ENCODE measurements at regions of chr11 and their contacts with region 1.

Region 1: DNA sequence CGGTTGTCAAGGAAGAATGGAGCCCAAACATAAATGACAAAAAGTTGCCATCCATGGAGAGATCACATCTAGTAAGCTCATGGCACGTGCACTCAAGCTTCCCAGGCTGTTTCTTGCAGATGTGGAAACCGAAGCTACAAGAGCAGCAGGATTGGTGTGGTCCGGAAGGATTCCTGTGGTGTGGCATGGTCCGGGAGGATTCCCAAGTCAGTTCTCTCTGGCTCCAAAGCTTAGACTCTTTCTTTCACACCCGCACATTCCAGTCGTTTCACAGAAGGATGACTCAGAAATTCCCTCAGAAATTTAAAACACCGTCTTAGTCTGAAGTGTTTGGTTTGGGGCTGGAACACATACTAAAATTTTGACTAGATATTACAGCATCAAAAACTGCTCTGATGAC is 78.0 kb upstream of the DRD2 start:
- DNase-seq: no peak
- H3K4me3 ChIP-seq: no peak overlapping the region
- H3K27ac ChIP-seq: no peak overlapping the region; a peak in 2 of 4 replicates
- H3K4me1 ChIP-seq: peaks cover 0 to 35% of the 10 kb centered on the region in 2 experiments; a peak in 3 of 4 replicates
- H3K27me3 ChIP-seq: no peaks in the 10 kb centered on the region
- CTCF ChIP-seq: no peak
- EP300 ChIP-seq: no peak
- RAD21 ChIP-seq: no peak

Region 2: DNA sequence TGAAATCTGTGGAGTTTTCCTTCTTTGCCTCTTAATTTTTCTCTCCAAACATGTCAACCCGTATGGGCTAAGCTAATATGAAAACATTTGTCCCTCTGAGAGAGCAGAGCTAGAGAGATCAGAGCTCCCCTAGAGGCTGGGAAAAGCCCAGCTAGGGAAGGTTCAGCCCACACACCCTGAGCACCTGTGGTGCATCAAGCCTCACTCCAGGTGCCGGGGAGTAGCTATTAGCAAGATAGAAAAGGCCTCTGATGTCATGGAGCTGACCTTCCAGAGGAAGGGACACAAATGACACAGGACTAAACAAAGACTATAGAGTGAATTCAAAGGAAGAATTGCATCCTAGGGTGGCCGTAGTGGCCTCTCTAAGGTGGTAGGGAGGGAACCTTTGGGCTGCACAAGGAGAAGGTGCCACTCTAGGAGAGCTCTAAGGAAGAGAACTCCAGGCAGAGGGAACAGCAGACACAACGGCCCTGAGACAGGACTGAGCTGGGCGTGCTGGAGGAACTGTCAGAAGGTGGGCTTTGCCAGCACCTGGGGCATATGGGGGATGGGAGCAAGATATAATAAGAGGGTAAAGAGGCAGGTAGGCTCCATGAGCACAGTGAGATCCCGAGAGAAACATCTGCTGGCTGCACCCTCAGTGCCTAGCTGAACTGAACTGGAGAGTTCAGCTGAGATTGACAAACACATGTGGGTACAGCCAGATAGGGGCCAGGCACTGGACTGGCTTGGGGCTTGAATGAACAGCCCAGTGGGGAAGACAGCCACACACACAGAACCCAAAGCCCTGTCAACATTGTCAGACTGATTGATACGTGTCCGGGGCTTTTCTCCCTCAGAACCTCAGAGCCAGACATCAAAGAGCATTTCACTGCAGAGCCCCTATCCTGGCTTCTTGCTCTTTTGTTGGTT is 12.6 kb before region 1 on chr11:
- CTCF ChIA-PET with region 1: interaction called, 13 read pairs
- POLR2A ChIA-PET with region 1: no interaction called
- DNase-seq: no peak
- H3K4me3 ChIP-seq: no peak overlapping the region
- H3K27ac ChIP-seq: no peak overlapping the region
- H3K4me1 ChIP-seq: peaks cover 0 to 2% of the 10 kb centered on the region in 2 experiments; a peak in 1 of 4 replicates
- H3K27me3 ChIP-seq: no peaks in the 10 kb centered on the region; the same call in 1 of the 2 replicates
- CTCF ChIP-seq: no peak
- EP300 ChIP-seq: no peak
- RAD21 ChIP-seq: no peak

Region 3: GRCh38 chr11:113721462-113722066 is 168.3 kb after region 1 on chr11:
- CTCF ChIA-PET with region 1: interaction called, 11 read pairs
- POLR2A ChIA-PET with region 1: no interaction called
- DNase-seq: no peak
- H3K4me3 ChIP-seq: no peak overlapping the region
- H3K27ac ChIP-seq: no peak overlapping the region
- H3K4me1 ChIP-seq: peaks cover 0 to 13% of the 10 kb centered on the region in 2 experiments; a peak in 2 of 4 replicates
- H3K27me3 ChIP-seq: no peaks in the 10 kb centered on the region
- CTCF ChIP-seq: no peak
- EP300 ChIP-seq: no peak
- RAD21 ChIP-seq: no peak

Measured in SK-N-SH (cell line).